ENCODE measurements at regions of chr20 and their contacts with region 1.

Region 1: DNA sequence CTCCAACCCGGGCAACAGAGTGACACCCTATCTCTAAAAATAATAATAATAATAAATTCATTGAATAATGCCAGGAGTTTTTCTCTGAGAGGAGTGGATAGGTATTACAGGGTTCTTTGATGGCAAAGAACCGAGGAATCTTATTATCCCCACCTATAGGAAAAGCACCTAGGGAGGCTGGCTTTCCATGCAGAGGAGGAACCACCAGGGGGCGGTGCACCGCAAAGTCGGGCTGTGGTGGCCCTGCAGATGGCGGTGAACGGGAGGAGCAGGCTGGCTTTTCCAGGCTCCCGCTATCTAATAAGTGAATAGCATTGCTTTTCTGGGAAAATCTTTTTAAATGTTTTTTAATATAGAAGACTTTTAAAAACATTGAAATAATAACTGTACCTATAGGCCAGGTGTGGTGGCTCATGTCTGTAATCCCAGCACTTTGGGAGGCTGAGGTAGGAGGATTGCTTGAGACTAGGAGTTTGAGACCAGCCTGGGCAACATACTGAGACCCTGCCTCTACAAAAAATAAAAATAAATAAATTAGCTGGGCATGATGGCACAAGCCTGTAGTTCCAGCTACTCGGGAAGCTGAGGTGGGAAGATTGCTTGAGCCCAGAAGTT is 864.2 kb downstream of the KIF16B start:
- H3K4me3 Mint-ChIP-seq: no peak overlapping the region
- H3K27ac Mint-ChIP-seq: no peak overlapping the region
- H3K4me1 Mint-ChIP-seq: no peaks in the 10 kb centered on the region
- H3K27me3 Mint-ChIP-seq: no peaks in the 10 kb centered on the region

Region 2: GRCh38 chr20:15654208-15654645 is 54.9 kb before region 1 on chr20:
- intact Hi-C with region 1: no loop called
- H3K4me3 Mint-ChIP-seq: no peak overlapping the region
- H3K27ac Mint-ChIP-seq: no peak overlapping the region
- H3K4me1 Mint-ChIP-seq: no peaks in the 10 kb centered on the region
- H3K27me3 Mint-ChIP-seq: no peaks in the 10 kb centered on the region

Region 3: DNA sequence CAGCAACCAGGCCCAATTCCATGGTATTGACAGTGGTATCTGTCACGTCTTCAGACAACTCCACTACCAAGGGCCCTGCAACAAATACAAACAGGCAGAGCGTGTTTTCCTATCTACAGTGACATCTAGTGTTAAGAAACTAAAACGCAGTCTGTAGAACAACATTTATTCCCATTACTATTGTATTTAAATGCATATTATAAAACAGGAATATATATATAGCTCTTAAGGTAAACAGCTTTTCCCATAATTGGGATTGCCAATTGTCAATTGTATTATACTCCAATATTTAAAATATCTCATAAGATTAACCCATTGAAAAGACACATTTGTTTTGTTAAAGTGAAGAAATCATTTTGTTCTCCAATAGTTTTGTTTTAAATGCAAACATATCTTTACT is 766.9 kb after region 1 on chr20:
- intact Hi-C with region 1: loop called (anchors 2 kb)
- H3K4me3 Mint-ChIP-seq: no peak overlapping the region
- H3K27ac Mint-ChIP-seq: no peak overlapping the region
- H3K4me1 Mint-ChIP-seq: peaks cover 19% of the 10 kb centered on the region
- H3K27me3 Mint-ChIP-seq: no peaks in the 10 kb centered on the region

Region 4: DNA sequence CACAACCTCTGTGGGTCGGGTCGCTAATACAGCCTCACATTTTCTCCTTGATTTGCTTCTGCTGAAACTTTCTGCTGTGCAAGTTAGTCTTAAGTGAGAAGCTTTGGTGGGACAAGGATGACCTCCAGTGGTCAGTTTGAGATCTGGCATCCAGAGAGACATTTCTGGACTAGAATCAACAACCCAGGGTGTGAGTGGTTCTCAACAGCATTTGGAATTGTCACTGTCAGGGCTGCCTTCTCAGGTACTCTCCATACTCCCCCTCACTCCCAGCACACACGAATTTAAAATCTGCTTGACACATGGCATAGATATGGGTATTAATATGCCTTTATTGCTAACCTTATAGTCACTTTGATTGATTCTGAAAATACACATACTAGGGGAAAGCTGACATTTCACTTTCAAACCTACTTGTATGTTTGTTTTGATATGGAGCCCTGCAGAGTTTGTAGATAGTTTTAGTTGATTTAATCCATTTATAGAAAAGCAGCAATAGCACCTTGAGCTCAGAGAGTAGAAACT is 1052.3 kb after region 1 on chr20:
- intact Hi-C with region 1: loop called (anchors 2 kb)
- H3K4me3 Mint-ChIP-seq: no peak overlapping the region
- H3K27ac Mint-ChIP-seq: no peak overlapping the region
- H3K4me1 Mint-ChIP-seq: peaks cover 6% of the 10 kb centered on the region
- H3K27me3 Mint-ChIP-seq: peaks cover 4% of the 10 kb centered on the region

Measured in dendritic cell treated with granulocyte-macrophage colony-stimulating factor and Interleukin-4, amounts not matched to agents 40 ng/mL and 50 ng/mL, for 4 days (primary cell).